Stomach (tissue), 19 donors: ENCODE measurements at regions of chr13 and their contacts with region 1.

Region 1: DNA sequence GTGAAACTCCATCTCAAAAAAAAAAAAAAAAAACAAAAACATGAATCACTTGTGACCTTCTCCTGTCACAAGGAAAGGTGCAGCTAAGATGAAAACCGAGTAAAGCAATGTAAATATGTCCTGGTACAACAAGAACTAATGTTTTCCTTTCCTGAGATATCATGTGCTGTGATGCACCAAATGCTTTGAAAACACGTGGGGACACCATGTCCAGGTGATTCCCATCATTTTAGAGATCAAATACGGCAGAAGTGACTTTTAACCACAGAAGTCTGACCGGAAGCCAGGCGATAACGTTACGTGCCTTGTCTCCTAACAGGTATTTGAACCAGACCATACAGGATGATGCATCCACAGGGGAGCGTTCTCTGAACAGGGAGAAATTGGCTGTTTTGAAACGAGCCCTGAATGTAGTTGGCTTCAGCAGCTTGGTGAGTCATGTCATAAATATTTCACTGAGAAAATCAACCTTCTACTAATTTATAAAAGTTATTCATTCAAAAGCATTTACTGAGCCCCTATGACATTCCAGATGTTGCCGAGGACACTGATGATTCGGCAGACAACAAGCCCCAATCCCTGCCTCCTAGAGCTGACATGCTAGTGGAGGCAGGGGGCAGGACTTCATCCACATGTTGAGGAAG is 328.1 kb downstream of the MYO16 start:
- DNase-seq: peak in 1 of 2 donors; percentile 34
- H3K4me3 ChIP-seq: no peak overlapping the region
- H3K27ac ChIP-seq: no peak overlapping the region
- H3K4me1 ChIP-seq: peaks cover 0 to 11% (median 0%) of the 10 kb centered on the region in 4 donors
- H3K27me3 ChIP-seq: no peaks in the 10 kb centered on the region
- CTCF ChIP-seq: no peak
- EP300 ChIP-seq: no peak
- POLR2A ChIP-seq: no peak

Region 2: GRCh38 chr13:109494925-109495345 is 537.4 kb after region 1 on chr13:
- intact Hi-C with region 1: no loop called
- DNase-seq: peak in 1 of 2 donors; percentile 62
- H3K4me3 ChIP-seq: no peak overlapping the region
- H3K27ac ChIP-seq: no peak overlapping the region
- H3K4me1 ChIP-seq: no peaks in the 10 kb centered on the region
- H3K27me3 ChIP-seq: no peaks in the 10 kb centered on the region
- CTCF ChIP-seq: no peak
- EP300 ChIP-seq: no peak
- POLR2A ChIP-seq: no peak

Region 3: GRCh38 chr13:110116072-110116487 is 1158.6 kb after region 1 on chr13:
- intact Hi-C with region 1: loop called (anchors 10 kb)
- DNase-seq: peak; percentile 75 to 88
- H3K4me3 ChIP-seq: no peak overlapping the region
- H3K27ac ChIP-seq: no peak overlapping the region
- H3K4me1 ChIP-seq: peaks cover 0 to 4% (median 1%) of the 10 kb centered on the region in 4 donors
- H3K27me3 ChIP-seq: peaks cover 0 to 32% (median 11%) of the 10 kb centered on the region in 3 donors
- CTCF ChIP-seq: peak in 5 of 7 experiments; percentile 58 to 77 (median 68)
- EP300 ChIP-seq: no peak
- POLR2A ChIP-seq: no peak